Left ventricle myocardium superior (tissue), 1 donor: ENCODE measurements at regions of chr14 and their contacts with region 1.

Region 1: DNA sequence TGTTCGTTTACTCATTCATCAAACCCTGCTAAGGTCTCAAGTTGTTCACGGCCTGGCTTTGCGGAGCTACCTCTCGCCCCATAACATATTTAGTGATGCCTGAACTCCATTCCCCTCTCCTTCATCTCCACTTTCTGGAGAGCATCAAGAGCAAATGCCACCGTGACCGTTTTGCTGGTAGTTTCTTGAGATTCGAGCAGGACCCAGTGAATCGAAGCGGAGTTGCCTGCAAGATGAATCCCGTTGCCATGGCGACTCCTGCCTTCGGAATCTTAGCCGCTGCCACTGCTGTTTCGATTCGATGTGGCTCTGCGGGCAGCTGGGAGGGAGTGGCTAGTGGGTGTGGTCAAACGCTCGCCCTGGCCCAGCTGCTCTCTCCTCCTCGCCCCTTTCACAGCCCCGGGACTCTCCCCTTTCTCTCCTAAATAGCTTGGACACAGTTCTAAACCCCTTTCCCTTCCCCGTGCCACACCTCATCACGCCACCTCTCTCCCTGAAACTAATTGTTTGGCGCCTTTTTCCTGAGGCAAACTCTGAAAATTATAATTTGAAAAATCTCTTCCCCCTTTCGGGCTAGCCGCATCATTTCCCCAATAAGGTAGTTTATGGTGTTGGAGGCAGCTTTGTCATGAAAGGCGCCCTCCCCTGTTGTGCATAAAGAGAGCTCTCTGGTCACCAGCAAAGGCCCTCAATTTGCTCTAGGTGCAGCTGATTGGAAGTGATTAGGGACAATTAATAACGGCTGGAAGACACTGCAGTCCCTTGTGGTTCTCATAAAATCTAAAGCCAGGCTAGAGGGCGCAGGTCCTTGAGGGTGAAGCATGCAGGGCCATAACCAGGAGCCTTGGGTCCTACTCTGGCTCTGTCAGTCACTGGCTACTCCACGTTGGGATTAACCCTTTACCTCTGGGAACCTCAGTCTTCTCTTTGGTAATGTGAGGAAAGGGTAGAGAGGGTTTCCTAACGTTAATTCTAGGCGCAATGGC is 1.6 kb downstream of the DAAM1 start:
- DNase-seq: peak; percentile 86
- ATAC-seq: peak; percentile 31

Region 2: GRCh38 chr14:59132796-59133494 is 57.1 kb before region 1 on chr14:
- intact Hi-C with region 1: loop called (anchors 10 kb)
- DNase-seq: no peak
- ATAC-seq: peak; percentile 15

Region 3: GRCh38 chr14:59333668-59334067 is 143.6 kb after region 1 on chr14:
- intact Hi-C with region 1: loop called (anchors 10 kb)
- DNase-seq: no peak
- ATAC-seq: peak; percentile 93